Endothelial cell of umbilical vein (primary cell): ENCODE measurements at regions of chr6 and their contacts with region 1.

Region 1: DNA sequence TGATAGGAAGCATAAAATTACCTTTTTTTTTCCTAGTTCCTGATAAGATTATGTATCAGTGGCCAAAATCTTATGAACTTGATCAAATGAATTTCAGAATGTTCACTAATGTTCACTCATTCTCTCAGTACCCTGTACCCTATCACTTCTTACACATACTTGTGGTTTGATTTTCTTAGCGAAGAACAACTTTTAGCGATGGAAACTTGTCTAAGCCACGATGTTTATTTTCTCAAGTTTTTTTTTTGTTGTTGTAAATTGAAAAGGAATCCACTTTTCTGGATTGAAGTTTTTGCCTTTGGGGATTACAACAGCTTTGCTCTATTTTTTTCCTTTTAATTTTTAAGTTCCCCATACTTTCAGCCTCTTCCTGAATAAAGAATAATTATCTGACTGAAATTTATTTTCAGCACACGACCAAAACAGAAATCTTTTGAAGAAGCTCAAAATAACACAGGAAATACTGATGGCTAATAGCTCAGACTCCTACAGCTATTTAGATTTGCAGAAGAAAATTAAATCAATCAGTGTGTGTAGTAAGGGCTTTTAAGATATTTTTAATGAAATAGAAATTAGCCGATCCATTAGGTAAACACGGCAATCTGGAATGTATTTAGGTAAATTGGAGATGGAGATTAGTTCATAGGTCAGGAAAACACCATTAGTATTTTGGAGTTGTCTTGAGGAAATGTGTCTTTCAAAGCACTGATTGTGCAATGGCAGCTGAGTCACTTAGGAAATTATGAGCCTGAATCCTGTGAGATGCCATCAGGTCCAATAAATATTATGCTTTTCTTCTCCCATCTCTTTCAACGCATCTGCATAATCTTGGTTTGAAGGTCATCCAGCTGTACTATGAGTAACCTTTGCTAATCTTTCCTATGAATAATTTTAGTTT is 217.5 kb downstream of the GJA1 start:
- DNase-seq: peak; percentile 96
- H3K4me3 ChIP-seq: peak overlapping the region in 1 of 3 experiments; percentile 57
- H3K27ac ChIP-seq: peak overlapping the region; percentile 98
- H3K4me1 ChIP-seq: peaks cover 51% of the 10 kb centered on the region
- H3K27me3 ChIP-seq: no peaks in the 10 kb centered on the region
- CTCF ChIP-seq: no peak
- POLR2A ChIP-seq: peak; percentile 29

Region 2: DNA sequence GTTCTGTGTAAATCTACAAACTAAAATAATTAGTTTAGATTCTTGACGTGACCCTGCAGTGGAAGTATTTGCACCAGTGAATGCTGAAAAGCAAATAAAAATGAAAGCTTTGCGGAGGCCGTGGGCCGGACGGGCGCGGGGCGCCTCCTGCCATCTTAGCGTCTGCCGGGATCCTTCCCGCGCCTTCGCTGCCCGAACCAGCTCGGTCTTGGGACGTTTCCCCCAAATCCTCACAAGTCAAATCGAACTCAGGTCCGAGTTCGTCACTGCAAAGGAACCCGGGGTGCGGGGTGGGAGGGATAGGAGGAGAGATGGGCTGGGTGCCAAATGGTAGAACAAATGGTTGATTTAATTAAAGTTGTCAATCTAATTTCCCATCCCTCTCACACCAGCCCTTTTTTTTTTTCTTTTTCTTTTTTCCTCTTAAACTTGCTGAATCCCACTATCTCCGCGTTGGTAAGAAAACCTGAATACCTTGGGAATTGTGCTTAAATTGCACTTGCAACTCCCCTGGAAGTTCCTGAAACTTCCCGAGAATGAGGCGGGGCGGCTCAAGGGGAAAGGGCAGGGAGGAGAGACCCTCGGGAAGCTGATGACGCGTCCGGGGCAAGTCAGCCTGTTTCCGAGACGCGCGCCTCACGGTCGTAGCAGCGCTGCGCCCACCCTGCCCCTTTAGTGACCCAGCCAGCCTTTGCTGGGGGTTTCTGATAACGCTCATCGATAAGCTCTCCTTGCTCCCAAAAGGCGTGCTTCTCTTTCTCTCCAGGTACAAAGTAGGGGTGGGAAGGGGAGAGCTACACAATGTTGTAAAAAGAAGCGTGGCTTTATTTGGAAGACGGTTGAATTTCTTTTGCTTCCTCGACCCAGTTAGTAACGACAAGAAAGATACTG is 215.8 kb before region 1 on chr6:
- CTCF ChIA-PET with region 1: interaction called, 13 read pairs
- POLR2A ChIA-PET with region 1: interaction called, 6 read pairs
- dilution Hi-C with region 1: no loop called
- intact Hi-C with region 1: loop called (anchors 1 kb)
- DNase-seq: peak; percentile 82
- H3K4me3 ChIP-seq: peak overlapping the region; percentile 94 to 100 (median 100)
- H3K27ac ChIP-seq: peak overlapping the region; percentile 99
- H3K4me1 ChIP-seq: peaks cover 31% of the 10 kb centered on the region
- H3K27me3 ChIP-seq: no peaks in the 10 kb centered on the region
- CTCF ChIP-seq: no peak
- POLR2A ChIP-seq: peak; percentile 60

Region 3: DNA sequence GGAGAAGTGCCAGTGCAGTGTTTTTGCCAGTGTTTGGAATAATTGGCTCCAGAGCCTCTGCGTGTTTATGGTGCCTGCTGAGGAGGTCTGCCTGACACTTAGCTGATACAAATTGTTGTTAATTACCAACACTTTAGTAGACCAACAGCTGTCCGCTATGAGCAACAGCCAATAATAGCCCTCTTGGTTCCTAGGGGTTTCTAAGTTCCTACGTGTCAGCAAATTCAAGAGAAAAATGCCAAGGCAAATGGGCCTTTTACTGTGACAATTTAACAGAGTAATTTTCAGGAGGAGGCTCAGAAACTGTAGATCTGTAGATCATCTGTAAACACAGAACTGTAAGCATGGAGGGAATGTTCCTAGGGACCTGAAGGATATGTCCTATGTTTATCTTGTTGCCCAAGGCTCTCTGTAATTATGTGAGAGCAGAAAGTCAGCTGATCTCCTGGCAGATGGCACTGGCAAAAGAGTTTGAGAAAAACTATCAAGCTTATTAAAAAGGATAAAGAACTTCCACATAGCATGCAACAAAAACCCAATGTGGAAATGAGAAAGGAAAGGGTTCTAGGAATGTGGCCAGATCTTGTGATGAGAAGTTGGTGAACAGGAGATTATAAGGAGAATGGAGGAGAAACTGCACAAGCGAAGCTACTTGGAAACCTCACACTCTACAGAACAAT is 59.8 kb before region 1 on chr6:
- CTCF ChIA-PET with region 1: no interaction called
- POLR2A ChIA-PET with region 1: no interaction called
- dilution Hi-C with region 1: no loop called
- intact Hi-C with region 1: no loop called
- DNase-seq: no peak
- H3K4me3 ChIP-seq: no peak overlapping the region
- H3K27ac ChIP-seq: no peak overlapping the region
- H3K4me1 ChIP-seq: no peaks in the 10 kb centered on the region
- H3K27me3 ChIP-seq: no peaks in the 10 kb centered on the region
- CTCF ChIP-seq: no peak
- POLR2A ChIP-seq: no peak

Region 4: GRCh38 chr6:121630716-121631115 is 22.3 kb before region 1 on chr6:
- CTCF ChIA-PET with region 1: no interaction called
- POLR2A ChIA-PET with region 1: no interaction called
- dilution Hi-C with region 1: no loop called
- intact Hi-C with region 1: loop called (anchors 1 kb)
- DNase-seq: peak; percentile 80
- H3K4me3 ChIP-seq: no peak overlapping the region
- H3K27ac ChIP-seq: no peak overlapping the region
- H3K4me1 ChIP-seq: peaks cover 16% of the 10 kb centered on the region
- H3K27me3 ChIP-seq: no peaks in the 10 kb centered on the region
- CTCF ChIP-seq: no peak
- POLR2A ChIP-seq: no peak

Region 5: DNA sequence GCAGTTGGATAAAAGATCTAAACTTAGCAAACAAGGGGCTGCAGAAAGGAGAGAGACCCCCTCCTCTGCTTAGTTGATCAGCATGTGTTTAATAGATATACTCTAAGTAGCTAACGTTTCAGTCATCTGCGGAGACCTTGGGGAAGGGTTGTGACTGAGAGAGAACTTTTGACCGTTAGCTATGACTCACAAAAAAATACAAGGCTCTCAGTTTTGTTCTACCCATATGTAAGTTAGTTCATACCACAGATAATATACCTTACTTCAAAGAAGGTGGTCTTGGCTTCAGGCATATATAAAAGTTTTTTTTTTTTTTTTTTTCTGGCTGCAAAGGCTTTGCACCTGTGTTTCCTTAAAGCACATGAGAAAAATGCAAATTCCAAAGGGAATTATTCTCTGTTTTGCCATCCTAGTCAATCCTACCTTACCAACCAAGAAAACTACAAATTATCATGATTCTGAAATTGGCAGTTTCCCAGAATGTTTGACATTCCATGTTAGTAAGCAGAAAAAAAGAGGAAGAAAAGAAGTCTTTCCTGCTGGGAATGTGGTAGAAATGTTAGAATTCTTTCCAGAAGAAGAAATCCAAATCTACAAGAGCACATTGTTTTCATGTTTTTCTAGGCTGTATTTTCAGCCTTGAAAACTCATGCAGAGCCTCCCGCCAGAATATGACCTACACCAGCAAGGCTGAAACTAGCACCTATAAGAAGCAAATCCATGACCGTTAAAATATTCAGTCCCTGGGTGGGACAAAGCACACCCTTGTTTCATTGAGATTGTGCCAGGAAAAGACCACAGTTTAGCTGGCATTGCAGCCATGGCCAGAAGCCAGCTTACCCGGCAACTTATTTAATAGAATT is 41.6 kb after region 1 on chr6:
- CTCF ChIA-PET with region 1: no interaction called
- POLR2A ChIA-PET with region 1: no interaction called
- dilution Hi-C with region 1: no loop called
- intact Hi-C with region 1: no loop called
- DNase-seq: peak; percentile 34
- H3K4me3 ChIP-seq: no peak overlapping the region
- H3K27ac ChIP-seq: no peak overlapping the region
- H3K4me1 ChIP-seq: peaks cover 11% of the 10 kb centered on the region
- H3K27me3 ChIP-seq: no peaks in the 10 kb centered on the region
- CTCF ChIP-seq: no peak
- POLR2A ChIP-seq: no peak

Region 6: GRCh38 chr6:121726596-121726995 is 73.6 kb after region 1 on chr6:
- CTCF ChIA-PET with region 1: no interaction called
- POLR2A ChIA-PET with region 1: no interaction called
- dilution Hi-C with region 1: no loop called
- intact Hi-C with region 1: loop called (anchors 5 kb)
- DNase-seq: peak; percentile 83
- H3K4me3 ChIP-seq: no peak overlapping the region
- H3K27ac ChIP-seq: peak overlapping the region; percentile 29
- H3K4me1 ChIP-seq: peaks cover 10% of the 10 kb centered on the region
- H3K27me3 ChIP-seq: no peaks in the 10 kb centered on the region
- CTCF ChIP-seq: no peak
- POLR2A ChIP-seq: no peak

Region 7: GRCh38 chr6:121940728-121941127 is 287.8 kb after region 1 on chr6:
- CTCF ChIA-PET with region 1: no interaction called
- POLR2A ChIA-PET with region 1: no interaction called
- dilution Hi-C with region 1: no loop called
- intact Hi-C with region 1: no loop called
- DNase-seq: no peak
- H3K4me3 ChIP-seq: no peak overlapping the region
- H3K27ac ChIP-seq: no peak overlapping the region
- H3K4me1 ChIP-seq: no peaks in the 10 kb centered on the region
- H3K27me3 ChIP-seq: no peaks in the 10 kb centered on the region
- CTCF ChIP-seq: no peak
- POLR2A ChIP-seq: no peak

Region 8: DNA sequence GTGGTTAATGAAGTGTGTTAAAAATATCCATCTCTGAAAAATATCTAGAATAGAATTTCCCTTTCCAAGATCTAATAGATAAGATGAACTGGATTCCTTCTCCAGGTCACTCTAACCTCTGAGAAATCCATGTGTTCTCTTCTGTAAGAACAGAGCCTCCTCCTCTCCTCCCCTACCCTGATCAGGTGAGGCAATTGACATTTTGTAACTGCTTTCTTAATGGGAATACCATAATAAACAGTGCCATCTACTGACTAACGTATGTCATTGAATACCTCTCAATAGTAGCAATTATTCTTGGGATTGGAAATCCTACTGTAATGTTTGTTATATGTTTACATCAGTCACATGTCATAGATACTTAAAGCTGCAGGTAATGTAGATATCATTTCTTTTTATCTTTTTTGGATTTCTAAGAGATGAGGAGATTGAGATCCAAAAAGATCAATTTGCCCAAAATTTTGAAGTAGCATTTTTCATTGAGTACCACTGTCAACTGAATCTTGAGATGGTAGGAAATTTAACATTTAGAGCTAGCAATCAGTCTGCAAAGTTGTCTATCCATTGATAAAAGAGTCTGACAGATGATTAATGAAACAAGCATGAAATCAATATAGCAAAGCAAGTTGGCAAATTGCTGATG is 380.7 kb after region 1 on chr6:
- CTCF ChIA-PET with region 1: no interaction called
- POLR2A ChIA-PET with region 1: no interaction called
- dilution Hi-C with region 1: no loop called
- intact Hi-C with region 1: loop called (anchors 5 kb)
- DNase-seq: peak; percentile 69
- H3K4me3 ChIP-seq: no peak overlapping the region
- H3K27ac ChIP-seq: no peak overlapping the region
- H3K4me1 ChIP-seq: no peaks in the 10 kb centered on the region
- H3K27me3 ChIP-seq: no peaks in the 10 kb centered on the region
- CTCF ChIP-seq: peak; percentile 35 to 51
- POLR2A ChIP-seq: no peak